CD8-positive, alpha-beta memory T cell (primary cell): ENCODE measurements at regions of chr14 and their contacts with region 1.

Region 1: DNA sequence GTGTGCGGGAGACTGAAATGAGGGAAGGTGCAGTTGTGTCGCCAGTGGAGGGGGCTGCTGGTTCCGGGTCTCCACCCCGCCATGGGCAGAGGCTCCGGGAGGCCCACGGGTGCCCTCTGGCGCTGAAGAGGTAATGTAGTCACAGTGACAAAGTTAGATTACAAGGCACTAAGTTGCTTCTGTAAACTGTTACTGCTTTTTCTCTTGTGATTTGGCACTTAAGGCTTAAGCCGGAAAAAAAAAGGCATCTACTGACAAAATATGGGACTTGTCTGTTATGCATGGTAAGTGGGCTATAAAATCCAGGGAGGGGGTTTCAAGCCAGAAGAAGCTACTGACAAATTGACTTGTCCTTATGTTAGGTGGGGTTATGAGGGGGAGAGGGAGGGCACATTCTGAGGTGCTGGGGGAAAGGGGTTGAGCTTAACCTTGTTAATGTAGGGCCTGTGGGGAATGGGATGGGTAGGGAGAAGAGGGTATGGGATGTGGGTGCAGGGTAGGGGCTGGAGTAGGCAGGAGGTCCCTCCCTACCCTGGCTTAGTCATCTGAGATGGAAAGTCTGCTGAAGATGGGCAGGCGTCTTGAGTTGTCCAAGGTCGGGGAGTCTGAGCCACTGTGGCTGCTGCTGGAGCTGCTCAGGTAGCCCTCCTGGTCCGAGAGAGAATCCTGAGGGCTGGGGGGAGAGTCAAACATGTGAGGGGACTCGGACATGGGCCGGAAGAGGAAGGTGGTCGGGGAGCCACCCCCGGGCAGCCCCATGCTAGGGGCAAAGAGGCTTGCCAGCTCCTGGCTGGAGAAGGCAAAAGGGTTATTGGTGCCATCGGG is 3.7 kb downstream of the ZFP36L1 start:
- DNase-seq: peak; percentile 79 to 93 (median 83)
- H3K4me3 ChIP-seq: peak overlapping the region; percentile 99
- H3K4me3 Mint-ChIP-seq: peak overlapping the region; percentile 91 to 98 (median 97)
- H3K27ac ChIP-seq: peak overlapping the region; percentile 99
- H3K27ac Mint-ChIP-seq: peak overlapping the region; percentile 96 to 100 (median 99)
- H3K4me1 ChIP-seq: peaks cover 52% of the 10 kb centered on the region
- H3K4me1 Mint-ChIP-seq: peaks cover 55 to 64% (median 60%) of the 10 kb centered on the region in 3 donors
- H3K27me3 ChIP-seq: no peaks in the 10 kb centered on the region
- H3K27me3 Mint-ChIP-seq: peaks cover 0 to 16% of the 10 kb centered on the region in 2 donors

Region 2: DNA sequence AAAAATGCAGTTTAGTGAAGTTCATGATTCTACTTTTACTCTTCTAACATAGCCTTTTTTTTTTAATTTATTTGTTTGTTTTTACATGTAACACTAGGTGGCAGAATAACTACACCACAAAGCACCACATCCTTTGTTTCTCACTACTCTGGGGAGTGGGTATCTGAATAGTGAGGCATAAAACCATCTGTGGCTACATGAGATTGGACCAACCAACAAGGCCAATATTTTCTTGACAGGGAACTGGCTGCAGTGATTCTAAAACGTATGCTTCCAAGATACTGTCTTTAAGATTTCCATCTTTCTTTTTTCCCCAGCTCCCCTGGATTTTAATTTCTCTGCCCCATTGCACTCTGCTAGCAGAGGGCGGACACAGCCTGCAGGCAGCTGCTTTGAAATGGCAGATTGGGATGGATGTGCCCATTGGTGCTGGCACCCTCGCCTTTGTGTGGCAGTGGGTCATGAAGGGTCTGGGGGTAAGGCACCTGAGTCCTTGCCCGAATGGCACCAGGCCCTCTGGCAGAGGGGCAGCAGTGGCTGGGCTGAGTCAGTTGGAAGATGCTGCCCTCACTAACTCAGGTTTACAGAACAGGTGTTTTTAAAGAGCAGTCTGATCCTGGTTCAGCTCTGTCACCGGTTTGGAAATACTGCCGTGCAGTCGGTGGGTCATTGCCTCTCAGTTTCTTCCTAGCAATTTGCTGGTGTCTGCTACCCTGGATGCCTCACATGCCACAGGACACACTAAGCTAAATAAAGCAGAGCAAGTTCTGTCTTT is 540.5 kb before region 1 on chr14:
- CTCF ChIA-PET with region 1: interaction called, 85 read pairs
- POLR2A ChIA-PET with region 1: interaction called, 6 read pairs
- DNase-seq: peak in 2 of 5 donors; percentile 39 to 57
- H3K4me3 ChIP-seq: no peak overlapping the region
- H3K4me3 Mint-ChIP-seq: no peak overlapping the region
- H3K27ac ChIP-seq: no peak overlapping the region
- H3K27ac Mint-ChIP-seq: peak overlapping the region in 3 of 8 donors; percentile 15 to 60 (median 52)
- H3K4me1 ChIP-seq: peaks cover 12% of the 10 kb centered on the region
- H3K4me1 Mint-ChIP-seq: peaks cover 8 to 17% (median 14%) of the 10 kb centered on the region in 3 donors
- H3K27me3 ChIP-seq: no peaks in the 10 kb centered on the region
- H3K27me3 Mint-ChIP-seq: no peaks in the 10 kb centered on the region

Region 3: DNA sequence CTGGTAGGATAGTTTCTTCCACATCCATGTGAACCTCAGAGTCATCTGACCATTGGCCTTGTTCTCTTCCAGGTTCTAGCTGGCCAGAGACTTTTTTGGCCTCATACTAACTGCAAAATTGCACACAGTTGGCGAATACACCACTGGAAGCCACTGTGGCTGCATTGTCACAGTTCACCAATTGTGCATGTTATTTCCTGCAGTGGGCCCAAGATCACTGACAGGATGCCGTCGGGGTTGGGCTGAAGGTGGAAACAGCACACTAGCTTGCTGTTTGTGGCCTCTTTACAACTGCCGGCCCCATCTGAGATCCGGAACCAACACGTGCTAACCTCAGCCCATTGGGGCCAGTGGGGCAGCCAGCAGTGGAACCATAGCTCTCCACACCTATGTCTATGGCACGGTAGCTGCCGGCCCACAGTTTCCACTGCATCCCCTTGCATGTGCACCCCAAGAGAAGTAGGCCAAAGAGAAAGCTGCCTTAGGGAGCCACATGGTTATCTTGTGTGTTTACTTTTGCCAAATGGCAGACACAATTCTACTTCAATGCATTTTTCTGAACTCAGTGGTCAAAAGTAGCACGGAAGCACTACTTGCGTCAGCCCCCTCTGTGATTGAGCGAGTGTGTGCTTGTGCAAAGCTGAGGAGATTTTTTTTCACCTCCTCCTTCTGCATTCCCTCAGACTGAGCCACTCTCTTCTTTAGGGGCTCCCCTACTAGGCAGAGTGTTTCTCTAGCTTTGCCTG is 505.7 kb before region 1 on chr14:
- CTCF ChIA-PET with region 1: interaction called, 39 read pairs
- POLR2A ChIA-PET with region 1: interaction called, 18 read pairs
- DNase-seq: peak; percentile 42 to 77 (median 65)
- H3K4me3 ChIP-seq: peak overlapping the region; percentile 3
- H3K4me3 Mint-ChIP-seq: peak overlapping the region; percentile 21 to 83 (median 65)
- H3K27ac ChIP-seq: peak overlapping the region; percentile 52
- H3K27ac Mint-ChIP-seq: peak overlapping the region; percentile 89 to 97 (median 94)
- H3K4me1 ChIP-seq: peaks cover 68% of the 10 kb centered on the region
- H3K4me1 Mint-ChIP-seq: peaks cover 64 to 71% (median 65%) of the 10 kb centered on the region in 3 donors
- H3K27me3 ChIP-seq: no peaks in the 10 kb centered on the region
- H3K27me3 Mint-ChIP-seq: no peaks in the 10 kb centered on the region

Region 4: DNA sequence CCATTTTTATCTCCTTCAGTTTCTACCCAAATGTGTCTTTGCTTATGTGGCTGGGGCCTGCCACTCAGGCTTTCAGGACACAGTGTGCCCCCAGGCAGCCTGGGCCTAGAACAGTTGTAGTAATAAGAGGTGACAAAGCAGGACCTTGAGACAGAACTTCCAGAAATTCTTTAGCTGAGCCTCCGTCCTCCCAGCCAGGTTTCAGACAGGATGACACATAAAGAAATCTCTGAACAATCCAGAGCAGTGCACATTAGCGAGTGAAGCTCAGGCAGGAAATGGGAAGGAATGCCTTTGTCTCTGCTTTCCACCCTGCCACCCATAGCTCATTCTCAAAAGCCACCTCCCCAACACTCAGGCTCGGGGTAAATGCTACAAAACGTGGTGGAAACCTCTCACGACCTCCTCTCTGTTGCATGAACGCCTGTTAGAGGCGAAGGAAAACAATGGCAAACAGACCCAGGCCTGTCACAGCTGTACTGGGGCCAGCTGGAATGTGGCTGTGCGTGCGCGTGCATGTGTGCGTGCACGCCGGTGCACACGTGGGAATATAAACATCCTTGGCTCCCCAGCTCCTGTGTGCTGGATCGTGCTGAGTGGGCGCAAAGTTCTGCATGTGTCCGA is 283.1 kb before region 1 on chr14:
- CTCF ChIA-PET with region 1: interaction called, 14 read pairs
- POLR2A ChIA-PET with region 1: interaction called, 13 read pairs
- DNase-seq: no peak
- H3K4me3 ChIP-seq: peak overlapping the region; percentile 35
- H3K4me3 Mint-ChIP-seq: peak overlapping the region in 6 of 7 donors; percentile 52 to 73 (median 69)
- H3K27ac ChIP-seq: no peak overlapping the region
- H3K27ac Mint-ChIP-seq: peak overlapping the region; percentile 74 to 96 (median 91)
- H3K4me1 ChIP-seq: peaks cover 69% of the 10 kb centered on the region
- H3K4me1 Mint-ChIP-seq: peaks cover 36 to 55% (median 44%) of the 10 kb centered on the region in 3 donors
- H3K27me3 ChIP-seq: no peaks in the 10 kb centered on the region
- H3K27me3 Mint-ChIP-seq: peaks cover 0 to 2% of the 10 kb centered on the region in 2 donors

Region 5: GRCh38 chr14:68685419-68686204 is 103.6 kb before region 1 on chr14:
- CTCF ChIA-PET with region 1: interaction called, 11 read pairs
- POLR2A ChIA-PET with region 1: interaction called, 15 read pairs
- DNase-seq: peak; percentile 66 to 94 (median 82)
- H3K4me3 ChIP-seq: no peak overlapping the region
- H3K4me3 Mint-ChIP-seq: peak overlapping the region; percentile 22 to 74 (median 50)
- H3K27ac ChIP-seq: peak overlapping the region; percentile 49
- H3K27ac Mint-ChIP-seq: peak overlapping the region; percentile 88 to 99 (median 98)
- H3K4me1 ChIP-seq: peaks cover 54% of the 10 kb centered on the region
- H3K4me1 Mint-ChIP-seq: peaks cover 58 to 68% (median 60%) of the 10 kb centered on the region in 3 donors
- H3K27me3 ChIP-seq: no peaks in the 10 kb centered on the region
- H3K27me3 Mint-ChIP-seq: no peaks in the 10 kb centered on the region

Region 6: DNA sequence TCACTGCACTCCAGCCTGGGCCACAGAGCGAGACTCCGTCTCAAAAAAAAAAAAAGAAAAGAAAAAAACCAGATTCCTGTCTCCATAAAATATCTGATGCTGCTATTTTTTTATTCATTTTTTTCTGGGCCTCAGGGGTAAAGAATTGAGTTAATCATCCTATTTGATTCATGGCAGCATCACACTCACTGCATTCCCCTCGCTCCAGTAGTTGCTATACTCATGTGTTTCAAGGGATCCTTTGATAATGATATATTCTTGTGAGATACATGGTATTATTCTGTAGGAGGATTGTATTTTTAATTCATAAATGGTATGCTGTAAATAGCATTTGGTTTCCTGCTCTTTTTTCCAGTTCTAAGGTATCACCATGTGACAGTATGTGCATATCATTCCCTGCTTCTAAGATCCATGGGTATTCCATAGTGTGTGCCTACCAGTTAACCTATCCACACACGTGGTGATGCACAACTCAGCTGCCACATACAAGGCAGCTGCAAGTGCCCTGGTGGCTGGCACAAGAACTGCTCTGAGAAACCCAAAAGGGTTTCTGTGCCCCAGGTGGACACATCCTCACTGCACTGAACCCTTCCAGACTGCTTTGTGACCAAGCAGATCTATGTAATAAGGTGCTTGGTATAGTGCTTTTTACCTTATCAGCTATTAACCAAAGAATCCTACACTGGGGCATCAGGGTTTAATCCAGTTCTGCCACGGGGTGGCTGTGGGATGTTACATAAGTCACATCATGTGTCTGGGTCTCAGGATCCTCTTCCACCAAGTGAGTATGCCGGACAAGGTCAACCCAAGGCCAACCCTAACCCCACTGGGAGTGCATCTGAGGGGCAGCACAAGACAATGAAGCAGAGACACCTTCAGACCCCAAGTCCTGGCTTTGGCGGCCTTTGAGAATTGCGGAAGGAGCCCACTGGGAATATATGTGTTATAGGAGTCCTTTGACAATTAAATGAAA is 70.9 kb before region 1 on chr14:
- CTCF ChIA-PET with region 1: interaction called, 13 read pairs
- POLR2A ChIA-PET with region 1: interaction called, 11 read pairs
- DNase-seq: peak in 1 of 5 donors; percentile 8
- H3K4me3 ChIP-seq: no peak overlapping the region
- H3K4me3 Mint-ChIP-seq: no peak overlapping the region
- H3K27ac ChIP-seq: no peak overlapping the region
- H3K27ac Mint-ChIP-seq: peak overlapping the region in 2 of 8 donors; percentile 29 to 43
- H3K4me1 ChIP-seq: peaks cover 25% of the 10 kb centered on the region
- H3K4me1 Mint-ChIP-seq: peaks cover 30 to 37% (median 36%) of the 10 kb centered on the region in 3 donors
- H3K27me3 ChIP-seq: no peaks in the 10 kb centered on the region
- H3K27me3 Mint-ChIP-seq: peaks cover 0 to 2% of the 10 kb centered on the region in 2 donors

Region 7: GRCh38 chr14:68862954-68863594 is 73.9 kb after region 1 on chr14:
- CTCF ChIA-PET with region 1: no interaction called
- POLR2A ChIA-PET with region 1: no interaction called
- DNase-seq: peak; percentile 27 to 72 (median 41)
- H3K4me3 ChIP-seq: no peak overlapping the region
- H3K4me3 Mint-ChIP-seq: no peak overlapping the region
- H3K27ac ChIP-seq: no peak overlapping the region
- H3K27ac Mint-ChIP-seq: peak overlapping the region in 1 of 8 donors; percentile 47
- H3K4me1 ChIP-seq: no peaks in the 10 kb centered on the region
- H3K4me1 Mint-ChIP-seq: no peaks in the 10 kb centered on the region
- H3K27me3 ChIP-seq: no peaks in the 10 kb centered on the region
- H3K27me3 Mint-ChIP-seq: peaks cover 0 to 3% of the 10 kb centered on the region in 2 donors